Stomach (tissue), 19 donors: ENCODE measurements at regions of chr1 and their contacts with region 1.

Region 1: GRCh38 chr1:26874896-26875295 is 11.9 kb downstream of the SFN start:
- DNase-seq: no peak
- H3K4me3 ChIP-seq: no peak overlapping the region
- H3K27ac ChIP-seq: no peak overlapping the region
- H3K4me1 ChIP-seq: peaks cover 0 to 8% (median 3%) of the 10 kb centered on the region in 4 donors
- H3K27me3 ChIP-seq: no peaks in the 10 kb centered on the region
- CTCF ChIP-seq: no peak
- EP300 ChIP-seq: no peak
- POLR2A ChIP-seq: no peak

Region 2: GRCh38 chr1:26744075-26744959 is 130.6 kb before region 1 on chr1:
- intact Hi-C with region 1: no loop called
- DNase-seq: peak; percentile 69 to 86
- H3K4me3 ChIP-seq: no peak overlapping the region
- H3K27ac ChIP-seq: peak overlapping the region; percentile 42 to 88 (median 71)
- H3K4me1 ChIP-seq: peaks cover 16 to 97% (median 61%) of the 10 kb centered on the region in 4 donors
- H3K27me3 ChIP-seq: no peaks in the 10 kb centered on the region
- CTCF ChIP-seq: no peak
- EP300 ChIP-seq: no peak
- POLR2A ChIP-seq: no peak

Region 3: DNA sequence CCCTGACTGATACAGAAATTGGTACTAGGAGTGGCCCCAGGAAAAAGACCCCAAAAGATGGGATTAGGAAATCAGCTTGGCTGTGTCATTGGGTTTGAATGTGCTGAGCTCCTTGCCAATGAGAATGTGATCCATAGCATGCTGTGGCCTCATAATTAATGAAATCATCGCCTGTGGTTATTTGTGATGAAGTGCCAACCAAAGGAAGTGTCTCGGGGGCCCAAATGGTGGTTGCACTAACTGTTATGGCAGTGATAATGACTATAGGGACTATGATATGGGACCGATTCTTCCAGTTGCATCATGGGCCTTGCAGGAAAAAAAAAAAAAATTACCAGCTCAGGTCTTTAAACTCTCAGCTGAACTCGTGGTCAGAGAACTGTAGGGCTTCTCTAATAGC is 63.8 kb before region 1 on chr1:
- intact Hi-C with region 1: loop called (anchors 10 kb)
- DNase-seq: no peak
- H3K4me3 ChIP-seq: no peak overlapping the region
- H3K27ac ChIP-seq: no peak overlapping the region
- H3K4me1 ChIP-seq: peaks cover 0 to 8% (median 3%) of the 10 kb centered on the region in 4 donors
- H3K27me3 ChIP-seq: no peaks in the 10 kb centered on the region
- CTCF ChIP-seq: no peak
- EP300 ChIP-seq: no peak
- POLR2A ChIP-seq: no peak